ENCODE measurements at regions of chr4 and their contacts with region 1.

Region 1: DNA sequence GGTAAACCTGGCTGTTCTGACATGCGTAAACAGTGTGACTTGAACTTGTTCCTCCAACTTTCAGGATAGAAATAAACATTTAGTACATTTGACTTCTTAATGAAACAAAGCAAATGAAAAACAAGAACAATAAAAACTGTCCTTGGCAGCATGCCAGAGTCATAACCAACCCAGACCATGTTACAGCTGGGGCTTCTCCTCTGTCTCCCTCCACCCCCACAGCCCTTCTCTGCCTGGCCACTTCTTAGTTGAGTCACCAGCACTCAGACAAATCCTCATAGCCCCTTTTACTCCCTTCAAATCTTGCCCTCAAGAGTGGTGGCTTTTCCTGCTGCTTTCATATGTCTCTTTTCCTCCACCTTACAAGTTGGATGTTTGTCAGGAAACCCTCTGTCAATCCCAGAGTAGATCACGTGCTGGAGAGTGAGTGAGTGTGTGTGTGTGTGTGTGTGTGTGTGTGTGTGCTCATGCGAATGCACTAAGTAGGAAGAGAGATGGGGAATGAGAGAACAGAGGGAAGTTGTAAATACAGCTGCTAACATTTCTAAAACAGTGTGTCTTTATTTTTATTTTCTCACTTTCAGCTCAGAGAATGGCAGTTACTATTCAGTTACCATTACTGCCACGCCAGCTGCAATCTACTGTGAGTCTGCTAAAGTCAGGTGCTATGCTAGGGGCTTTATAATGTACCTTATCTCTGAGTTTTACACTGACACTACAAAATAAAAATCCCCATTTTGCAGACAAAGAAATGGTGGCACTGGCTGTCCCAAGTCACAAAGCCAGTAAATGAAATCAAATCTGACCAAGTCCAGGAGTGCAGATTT is 15.0 kb downstream of the SCARB2 start:
- DNase-seq: peak in 1 of 5 donors; percentile 8
- H3K4me3 ChIP-seq: no peak overlapping the region
- H3K4me3 Mint-ChIP-seq: peak overlapping the region in 5 of 8 donors; percentile 3 to 39 (median 32)
- H3K27ac ChIP-seq: no peak overlapping the region
- H3K27ac Mint-ChIP-seq: peak overlapping the region in 6 of 7 donors; percentile 4 to 85 (median 78)
- H3K4me1 ChIP-seq: peaks cover 21% of the 10 kb centered on the region
- H3K4me1 Mint-ChIP-seq: peaks cover 34 to 49% (median 42%) of the 10 kb centered on the region in 4 donors
- H3K27me3 ChIP-seq: no peaks in the 10 kb centered on the region
- H3K27me3 Mint-ChIP-seq: no peaks in the 10 kb centered on the region

Region 2: GRCh38 chr4:76213415-76214176 is 15.0 kb after region 1 on chr4 and contains the start of gene SCARB2:
- CTCF ChIA-PET with region 1: no interaction called
- POLR2A ChIA-PET with region 1: interaction called, 5 read pairs
- intact Hi-C with region 1: loop called (anchors 1 kb)
- DNase-seq: peak; percentile 79 to 88 (median 83)
- H3K4me3 ChIP-seq: peak within 1 kb of the TSS; percentile 77 to 90
- H3K4me3 Mint-ChIP-seq: peak within 1 kb of the TSS; percentile 89 to 97 (median 96)
- H3K27ac ChIP-seq: peak within 1 kb of the TSS; percentile 84
- H3K27ac Mint-ChIP-seq: peak within 1 kb of the TSS; percentile 92 to 98 (median 98)
- H3K4me1 ChIP-seq: peaks cover 43% of the 10 kb centered on the region
- H3K4me1 Mint-ChIP-seq: peaks cover 39 to 72% (median 48%) of the 10 kb centered on the region in 4 donors
- H3K27me3 ChIP-seq: no peaks in the 10 kb centered on the region
- H3K27me3 Mint-ChIP-seq: no peaks in the 10 kb centered on the region
- total RNA-seq, gene SCARB2: 23.3 to 23.5 TPM

Region 3: DNA sequence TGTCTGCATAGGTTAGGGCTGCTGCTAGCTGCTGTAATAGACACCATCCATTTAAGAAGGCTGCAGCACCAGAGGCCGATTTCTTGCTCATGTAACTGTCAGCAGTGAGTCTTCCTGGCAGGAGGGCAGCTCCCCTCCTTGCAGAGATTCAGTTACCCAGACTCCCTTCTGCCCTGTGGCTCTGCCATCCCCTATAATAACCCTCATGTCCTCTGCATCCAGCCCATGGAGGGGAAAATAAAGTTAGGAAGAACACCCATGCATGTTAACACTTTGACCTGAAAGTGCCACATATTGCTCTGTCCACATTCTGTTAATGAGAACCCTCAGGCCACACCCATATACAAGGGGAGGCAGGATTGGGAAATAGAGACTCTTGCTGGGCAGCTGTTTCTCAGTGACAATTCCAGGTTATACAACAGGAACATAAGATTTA is 113.3 kb after region 1 on chr4:
- CTCF ChIA-PET with region 1: no interaction called
- POLR2A ChIA-PET with region 1: no interaction called
- intact Hi-C with region 1: no loop called
- DNase-seq: no peak
- H3K4me3 ChIP-seq: no peak overlapping the region
- H3K4me3 Mint-ChIP-seq: no peak overlapping the region
- H3K27ac ChIP-seq: no peak overlapping the region
- H3K27ac Mint-ChIP-seq: peak overlapping the region in 2 of 7 donors; percentile 14 to 37
- H3K4me1 ChIP-seq: peaks cover 9% of the 10 kb centered on the region
- H3K4me1 Mint-ChIP-seq: peaks cover 3 to 10% (median 6%) of the 10 kb centered on the region in 4 donors
- H3K27me3 ChIP-seq: no peaks in the 10 kb centered on the region
- H3K27me3 Mint-ChIP-seq: peaks cover 1 to 4% of the 10 kb centered on the region in 2 donors